ENCODE measurements at regions of chr2 and their contacts with region 1.

Region 1: GRCh38 chr2:30691948-30692828 is 115.1 kb downstream of the CAPN13 start:
- DNase-seq: peak in 2 of 5 donors; percentile 61 to 63
- ATAC-seq: peak in 3 of 4 donors; percentile 63 to 75 (median 65)
- H3K4me3 ChIP-seq: no peak overlapping the region
- H3K27ac ChIP-seq: peak overlapping the region in 6 of 12 donors; percentile 29 to 80 (median 48)
- H3K4me1 ChIP-seq: peaks cover 0 to 53% (median 27%) of the 10 kb centered on the region in 12 donors
- H3K27me3 ChIP-seq: no peaks in the 10 kb centered on the region
- CTCF ChIP-seq: peak in 10 of 12 donors; percentile 29 to 57 (median 44)
- POLR2A ChIP-seq: no peak

Region 2: DNA sequence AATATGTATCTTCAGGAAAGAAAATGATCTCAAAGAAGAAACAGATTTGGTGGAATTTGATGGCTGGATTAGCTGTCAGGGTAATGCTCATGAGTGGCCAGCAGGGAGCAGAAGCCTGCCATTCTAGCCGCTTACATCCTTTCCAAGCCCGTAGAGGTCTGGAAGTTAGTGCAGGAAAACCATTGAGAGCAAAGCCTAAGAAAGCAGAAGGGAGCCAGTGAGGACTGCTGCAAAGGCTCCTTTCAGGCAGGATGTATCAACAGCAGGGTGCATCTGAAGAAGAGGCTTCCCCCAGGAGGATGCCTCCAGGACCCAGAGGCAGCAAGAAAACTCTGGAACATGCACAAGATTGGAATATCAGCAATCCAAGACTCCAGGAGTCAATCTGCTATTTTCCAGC is 483.7 kb before region 1 on chr2:
- intact Hi-C with region 1: loop called in 3 of 10 experiments (anchors 5 kb)
- DNase-seq: peak in 4 of 5 donors; percentile 63 to 79 (median 74)
- ATAC-seq: peak; percentile 51 to 96 (median 94)
- H3K4me3 ChIP-seq: no peak overlapping the region
- H3K27ac ChIP-seq: peak overlapping the region in 2 of 12 donors; percentile 16 to 35
- H3K4me1 ChIP-seq: peaks cover 0 to 28% (median 4%) of the 10 kb centered on the region in 12 donors
- H3K27me3 ChIP-seq: no peaks in the 10 kb centered on the region
- CTCF ChIP-seq: peak; percentile 82 to 96 (median 90)
- POLR2A ChIP-seq: no peak

Region 3: GRCh38 chr2:30346471-30347169 is 345.6 kb before region 1 on chr2:
- intact Hi-C with region 1: loop called in 5 of 10 experiments (anchors 5 kb)
- DNase-seq: peak; percentile 85 to 92 (median 88)
- ATAC-seq: peak; percentile 96 to 98 (median 96)
- H3K4me3 ChIP-seq: peak overlapping the region; percentile 5 to 63 (median 54)
- H3K27ac ChIP-seq: peak overlapping the region; percentile 69 to 96 (median 86)
- H3K4me1 ChIP-seq: peaks cover 8 to 55% (median 37%) of the 10 kb centered on the region in 12 donors
- H3K27me3 ChIP-seq: no peaks in the 10 kb centered on the region
- CTCF ChIP-seq: no peak
- POLR2A ChIP-seq: peak in 1 of 2 donors; percentile 69

Region 4: GRCh38 chr2:30421604-30422443 is 270.4 kb before region 1 on chr2:
- intact Hi-C with region 1: loop called in 2 of 10 experiments (anchors 5 to 10 kb)
- DNase-seq: peak in 1 of 5 donors; percentile 40
- ATAC-seq: peak; percentile 79 to 84 (median 82)
- H3K4me3 ChIP-seq: peak overlapping the region in 5 of 12 donors; percentile 6 to 28 (median 8)
- H3K27ac ChIP-seq: peak overlapping the region; percentile 45 to 92 (median 80)
- H3K4me1 ChIP-seq: peaks cover 0 to 40% (median 26%) of the 10 kb centered on the region in 12 donors
- H3K27me3 ChIP-seq: no peaks in the 10 kb centered on the region
- CTCF ChIP-seq: no peak
- POLR2A ChIP-seq: no peak

Region 5: GRCh38 chr2:30611583-30611982 is 80.6 kb before region 1 on chr2:
- intact Hi-C with region 1: loop called in 1 of 10 experiments (anchors 10 kb)
- DNase-seq: peak in 1 of 5 donors; percentile 38
- ATAC-seq: peak; percentile 26 to 94 (median 85)
- H3K4me3 ChIP-seq: no peak overlapping the region
- H3K27ac ChIP-seq: peak overlapping the region in 10 of 12 donors; percentile 5 to 75 (median 48)
- H3K4me1 ChIP-seq: peaks cover 0 to 38% (median 8%) of the 10 kb centered on the region in 12 donors
- H3K27me3 ChIP-seq: no peaks in the 10 kb centered on the region
- CTCF ChIP-seq: no peak
- POLR2A ChIP-seq: no peak

Measured in heart left ventricle (tissue), 16 donors.